ENCODE measurements at regions of chr19 and their contacts with region 1.

Region 1: GRCh38 chr19:42244347-42245220 is 2.2 kb upstream of the GSK3A start:
- DNase-seq: peak; percentile 89 to 96 (median 92)
- H3K4me3 ChIP-seq: peak overlapping the region; percentile 49 to 98 (median 88)
- H3K27ac ChIP-seq: peak overlapping the region; percentile 72 to 100 (median 97)
- H3K27me3 ChIP-seq: no peaks in the 10 kb centered on the region
- CTCF ChIP-seq: peak; percentile 64 to 95 (median 88)

Region 2: DNA sequence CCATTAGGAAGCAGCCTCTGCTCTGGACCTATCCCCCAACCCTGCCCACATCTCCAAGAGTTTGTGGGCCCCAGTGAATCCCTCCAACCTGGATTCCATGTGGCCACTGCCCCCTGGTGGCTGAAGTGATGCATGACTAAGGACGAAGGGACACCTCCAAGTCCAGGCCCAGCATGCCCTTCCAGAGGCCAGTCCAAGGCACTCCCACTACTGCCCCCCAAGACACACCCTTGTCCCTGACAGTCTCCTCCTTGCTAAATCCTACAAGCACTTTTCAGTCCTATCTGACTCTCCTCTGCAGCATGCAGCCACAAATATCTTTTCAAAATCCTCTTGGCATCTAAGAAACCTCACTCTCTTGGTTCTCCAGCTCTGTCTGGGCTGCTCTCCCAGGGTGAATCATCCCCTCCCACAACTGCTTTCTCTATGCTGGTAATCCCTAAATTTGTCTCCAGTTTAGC is 60.2 kb before region 1 on chr19:
- intact Hi-C with region 1: loop called in 1 of 2 experiments (anchors 2 kb)
- DNase-seq: peak; percentile 71 to 86 (median 80)
- H3K4me3 ChIP-seq: no peak overlapping the region
- H3K27ac ChIP-seq: peak overlapping the region in 40 of 59 donors; percentile 5 to 85 (median 54)
- H3K27me3 ChIP-seq: peaks cover 0 to 25% (median 2%) of the 10 kb centered on the region in 45 donors
- CTCF ChIP-seq: peak; percentile 76 to 97 (median 94)

Region 3: DNA sequence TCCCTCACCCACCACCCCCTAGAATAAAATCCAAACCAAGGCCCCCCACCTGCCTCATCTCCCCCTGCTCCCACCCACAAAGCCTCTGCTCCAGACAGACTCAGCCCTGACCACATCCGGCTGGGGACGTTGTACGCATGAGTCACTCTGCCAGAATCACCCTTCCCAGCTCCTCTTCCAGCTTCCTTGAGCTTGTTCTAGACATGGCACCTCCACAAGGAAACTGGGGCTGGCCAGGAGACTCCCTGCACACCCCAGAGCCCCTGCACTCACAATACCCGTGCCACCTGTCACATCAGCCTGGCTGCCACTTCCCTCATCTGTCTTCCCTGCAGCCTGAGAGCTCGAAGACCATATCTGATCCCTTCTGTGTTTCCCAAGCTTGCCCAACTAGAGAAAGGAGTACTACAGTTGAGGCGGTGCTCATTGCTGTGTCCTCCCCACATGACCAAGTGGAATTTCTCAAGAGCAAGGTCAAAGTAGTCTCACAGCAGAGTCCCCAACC is 36.8 kb before region 1 on chr19:
- intact Hi-C with region 1: no loop called
- DNase-seq: peak in 1 of 10 donors; percentile 28
- H3K4me3 ChIP-seq: no peak overlapping the region
- H3K27ac ChIP-seq: peak overlapping the region in 3 of 59 donors; percentile 20 to 43 (median 28)
- H3K27me3 ChIP-seq: no peaks in the 10 kb centered on the region
- CTCF ChIP-seq: no peak

Region 4: DNA sequence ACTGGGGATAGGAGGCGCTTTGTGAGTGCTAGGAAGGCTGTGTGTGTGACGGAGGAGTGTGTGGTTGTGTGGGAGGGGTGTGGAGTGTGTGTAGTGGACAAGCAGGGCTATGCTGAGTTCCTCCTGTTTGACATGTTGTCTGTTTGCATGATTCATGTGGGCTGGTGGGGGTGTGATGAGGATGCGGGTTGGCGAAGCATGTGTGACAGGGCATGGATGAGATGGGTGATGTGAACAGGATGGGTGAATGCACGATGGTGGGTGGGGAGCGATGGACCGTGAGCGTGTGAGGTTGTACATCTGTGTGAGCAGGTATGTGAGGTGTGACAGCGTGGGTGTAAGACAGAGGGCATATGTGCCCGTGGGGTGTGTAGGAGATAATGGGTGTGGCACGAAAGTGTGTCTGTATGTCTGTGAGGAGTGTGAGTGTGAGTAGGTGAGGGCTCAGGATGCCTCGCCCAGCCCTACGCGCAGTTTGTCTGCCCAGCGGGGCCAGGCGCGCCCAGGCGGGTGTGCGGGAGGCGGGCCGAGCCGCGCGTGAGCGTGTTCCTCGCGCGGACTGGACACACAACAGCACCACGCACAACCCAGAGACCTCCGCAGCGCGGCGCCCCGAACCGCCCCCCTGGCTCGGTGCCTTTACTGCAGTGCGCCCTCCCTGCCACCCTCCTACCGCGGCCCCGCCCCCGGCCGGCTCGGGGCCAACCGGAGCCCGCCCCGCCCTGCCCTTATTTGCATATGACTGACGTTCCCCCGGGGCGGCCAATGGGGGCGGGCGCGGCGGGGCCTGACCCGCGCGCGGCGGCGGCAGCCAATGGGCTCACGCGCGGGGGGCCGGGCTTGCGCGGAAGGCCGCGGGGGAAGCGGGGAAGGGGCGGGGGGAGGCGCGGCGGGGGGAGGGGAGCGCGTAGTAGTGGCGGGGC is 38.8 kb after region 1 on chr19:
- intact Hi-C with region 1: loop called (anchors 1 to 2 kb)
- DNase-seq: peak; percentile 93 to 97 (median 96)
- H3K4me3 ChIP-seq: peak overlapping the region; percentile 37 to 90 (median 65)
- H3K27ac ChIP-seq: peak overlapping the region; percentile 95 to 100 (median 99)
- H3K27me3 ChIP-seq: no peaks in the 10 kb centered on the region
- CTCF ChIP-seq: peak in 33 of 56 donors; percentile 13 to 56 (median 29)

Region 5: DNA sequence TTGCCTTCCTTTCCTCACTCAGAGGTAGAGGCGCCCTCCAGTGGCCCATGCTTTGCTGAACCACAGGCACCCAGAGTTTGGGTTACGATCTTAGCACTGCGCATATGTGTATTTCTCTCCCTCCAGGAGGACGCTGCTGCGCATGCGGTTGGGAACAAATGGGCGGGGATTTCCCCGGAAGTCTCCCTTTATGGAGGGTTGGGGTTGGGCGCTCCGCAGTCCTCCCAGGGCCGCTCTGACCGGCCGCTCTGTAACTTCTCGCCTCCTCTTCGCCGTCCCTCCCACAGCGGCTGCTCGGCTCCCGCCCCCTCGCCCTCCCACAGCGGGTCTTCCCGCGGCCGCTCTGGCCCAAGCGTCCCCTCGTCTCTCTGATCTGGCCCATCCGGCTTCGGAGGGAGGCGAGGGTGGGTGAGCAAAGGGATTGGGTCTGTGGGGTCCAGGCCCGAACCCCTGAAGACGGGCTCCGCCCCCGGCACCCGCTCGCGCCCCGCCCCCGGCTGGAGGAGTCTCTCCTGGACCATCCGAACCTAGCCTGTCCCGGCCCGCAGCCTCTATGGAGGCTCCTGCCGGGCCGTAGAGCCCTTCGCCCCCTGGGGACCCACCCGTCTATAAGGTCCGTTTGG is 80.8 kb after region 1 on chr19 and contains the start of gene MEGF8:
- intact Hi-C with region 1: loop called (anchors 1 kb)
- DNase-seq: peak; percentile 94 to 99 (median 98)
- H3K4me3 ChIP-seq: peak within 1 kb of the TSS; percentile 53 to 100 (median 92)
- H3K27ac ChIP-seq: peak within 1 kb of the TSS in 55 of 59 donors; percentile 21 to 90 (median 77)
- H3K27me3 ChIP-seq: no peaks in the 10 kb centered on the region
- CTCF ChIP-seq: peak; percentile 77 to 98 (median 92)
- total RNA-seq, gene MEGF8: 53.4 to 167 (median 109) TPM

Region 6: GRCh38 chr19:42423462-42424344 is 179.1 kb after region 1 on chr19:
- intact Hi-C with region 1: loop called in 1 of 2 experiments (anchors 10 kb)
- DNase-seq: peak; percentile 80 to 96 (median 94)
- H3K4me3 ChIP-seq: peak overlapping the region; percentile 60 to 100 (median 84)
- H3K27ac ChIP-seq: peak overlapping the region; percentile 0 to 96 (median 88)
- H3K27me3 ChIP-seq: no peaks in the 10 kb centered on the region
- CTCF ChIP-seq: peak in 32 of 56 donors; percentile 7 to 63 (median 32)

Measured in dorsolateral prefrontal cortex (tissue), 120 donors.